Adrenal gland (tissue), 19 donors: ENCODE measurements at regions of chr7 and their contacts with region 1.

Region 1: DNA sequence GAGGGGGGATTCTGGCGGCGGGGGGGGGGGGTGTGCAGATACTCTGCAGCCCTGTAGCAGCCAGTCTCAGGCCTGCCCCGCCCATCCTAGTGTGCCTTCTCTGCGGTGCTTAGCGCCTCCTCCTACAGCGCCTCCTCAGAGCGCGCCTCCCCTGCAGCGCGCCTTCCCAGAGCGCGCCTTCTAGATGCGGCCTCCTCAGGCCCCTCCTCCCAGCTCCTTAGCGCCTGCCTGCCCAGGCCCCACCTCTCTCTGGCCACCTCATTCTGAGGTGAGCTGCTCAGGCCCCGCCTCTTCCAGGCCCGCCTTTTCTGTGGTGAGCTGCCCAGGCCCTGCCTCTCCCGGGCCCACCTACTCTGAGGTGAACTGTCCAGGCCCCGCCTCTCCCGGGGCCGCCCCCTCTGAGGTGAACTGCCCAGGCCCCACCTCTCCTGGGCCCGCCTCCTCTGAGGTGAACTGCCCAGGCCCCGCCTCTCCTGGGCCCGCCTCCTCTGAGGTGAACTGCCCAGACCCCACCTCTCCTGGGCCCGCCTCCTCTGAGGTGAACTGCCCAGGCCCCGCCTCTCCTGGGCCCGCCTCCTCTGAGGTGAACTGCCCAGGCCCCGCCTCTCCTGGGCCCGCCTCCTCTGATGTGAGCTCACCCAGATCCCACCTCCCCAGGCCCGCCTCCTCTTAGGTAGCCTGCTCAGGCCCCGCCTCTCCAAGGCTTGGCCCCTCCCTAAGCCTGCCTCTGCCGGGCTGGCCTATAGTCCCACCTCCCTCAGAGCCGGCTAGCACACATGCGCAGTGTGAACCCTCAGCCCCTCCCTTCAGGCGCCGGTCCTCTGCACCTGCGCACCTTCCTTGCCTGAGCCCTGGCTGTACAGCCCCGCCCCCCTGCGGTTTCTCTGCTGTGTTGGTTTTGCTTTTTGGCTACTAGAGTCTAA is 2.1 kb upstream of the SGCE start:
- DNase-seq: peak; percentile 93 to 97 (median 96)
- H3K4me3 ChIP-seq: peak overlapping the region in 2 of 4 donors; percentile 0 to 73
- H3K27ac ChIP-seq: peak overlapping the region in 3 of 5 donors; percentile 38 to 80 (median 44)
- H3K4me1 ChIP-seq: peaks cover 0 to 3% of the 10 kb centered on the region in 2 donors
- H3K27me3 ChIP-seq: no peaks in the 10 kb centered on the region
- CTCF ChIP-seq: no peak
- POLR2A ChIP-seq: peak in 1 of 2 donors; percentile 62

Region 2: GRCh38 chr7:94069162-94069739 is 588.8 kb before region 1 on chr7:
- intact Hi-C with region 1: no loop called
- DNase-seq: no peak
- H3K4me3 ChIP-seq: no peak overlapping the region
- H3K27ac ChIP-seq: no peak overlapping the region
- H3K4me1 ChIP-seq: peaks cover 0 to 7% of the 10 kb centered on the region in 2 donors
- H3K27me3 ChIP-seq: no peaks in the 10 kb centered on the region
- CTCF ChIP-seq: no peak
- POLR2A ChIP-seq: no peak

Region 3: DNA sequence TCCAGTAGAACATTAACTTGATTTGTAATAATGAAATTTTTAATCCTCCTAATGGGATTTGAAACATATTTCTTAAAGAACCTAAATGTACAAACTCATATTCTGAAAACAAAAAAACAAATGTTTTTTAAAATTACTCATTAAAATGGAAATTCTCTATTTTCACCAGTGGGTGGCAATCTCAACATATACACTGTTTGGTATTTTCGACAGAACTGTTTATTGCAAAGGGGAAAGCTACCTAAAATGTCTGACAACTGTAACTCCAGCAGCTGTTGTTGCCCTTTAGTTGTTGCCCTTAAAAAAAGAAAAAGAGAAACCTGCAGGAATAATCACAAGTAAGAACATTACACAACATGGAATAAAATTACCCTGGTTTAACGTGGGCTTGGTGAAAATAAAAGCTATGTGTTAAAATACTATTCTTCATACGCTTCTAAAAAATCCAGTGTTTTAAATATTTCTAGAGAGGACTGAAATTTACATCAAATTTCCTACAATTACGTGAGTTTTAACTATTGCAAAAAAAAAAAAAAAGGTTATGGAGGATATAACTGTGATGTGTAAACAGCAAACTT is 208.8 kb before region 1 on chr7:
- intact Hi-C with region 1: loop called (anchors 5 to 10 kb)
- DNase-seq: no peak
- H3K4me3 ChIP-seq: peak overlapping the region in 1 of 4 donors; percentile 13
- H3K27ac ChIP-seq: no peak overlapping the region
- H3K4me1 ChIP-seq: no peaks in the 10 kb centered on the region
- H3K27me3 ChIP-seq: no peaks in the 10 kb centered on the region
- CTCF ChIP-seq: peak; percentile 45 to 84 (median 72)
- POLR2A ChIP-seq: no peak

Region 4: DNA sequence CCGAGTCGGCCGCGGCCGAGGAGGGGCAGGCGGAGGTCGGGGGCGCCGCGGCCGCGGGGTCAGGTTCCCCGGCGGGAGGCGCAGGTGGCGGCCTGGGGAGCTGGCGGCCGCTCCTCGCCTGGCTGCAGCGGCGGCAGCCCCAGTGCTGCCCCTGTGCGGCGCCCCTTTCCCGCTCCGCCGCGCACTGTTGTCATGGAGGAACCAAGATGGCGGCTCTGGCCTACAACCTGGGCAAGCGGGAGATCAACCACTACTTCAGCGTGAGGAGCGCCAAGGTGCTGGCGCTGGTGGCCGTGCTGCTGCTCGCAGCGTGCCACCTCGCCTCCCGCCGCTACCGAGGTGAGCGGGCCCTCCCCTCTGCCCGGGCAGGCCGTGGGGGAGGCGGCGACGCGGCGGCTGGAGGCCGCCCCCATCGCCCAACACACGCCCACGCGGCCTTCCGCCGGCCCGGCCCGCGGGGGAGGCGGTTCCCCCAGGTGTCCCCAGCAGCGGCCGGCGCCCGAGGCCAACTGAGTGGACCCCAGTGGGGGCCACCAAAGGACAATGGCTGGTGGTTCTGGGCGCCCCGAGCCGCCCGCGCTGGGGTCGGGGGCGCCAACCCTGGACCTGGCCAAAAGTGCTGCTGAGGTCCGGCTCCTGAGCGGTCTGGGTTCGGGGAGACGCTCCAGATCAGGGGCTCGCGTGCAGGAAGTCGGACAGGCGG is 148.0 kb before region 1 on chr7:
- intact Hi-C with region 1: loop called in 1 of 2 experiments (anchors 10 kb)
- DNase-seq: peak; percentile 64 to 77 (median 72)
- H3K4me3 ChIP-seq: peak overlapping the region; percentile 66 to 98 (median 82)
- H3K27ac ChIP-seq: peak overlapping the region; percentile 72 to 97 (median 92)
- H3K4me1 ChIP-seq: peaks cover 26 to 43% of the 10 kb centered on the region in 2 donors
- H3K27me3 ChIP-seq: no peaks in the 10 kb centered on the region
- CTCF ChIP-seq: peak in 2 of 6 experiments; percentile 17 to 23
- POLR2A ChIP-seq: peak; percentile 39 to 62

Region 5: GRCh38 chr7:94739180-94739579 is 81.1 kb after region 1 on chr7:
- intact Hi-C with region 1: no loop called
- DNase-seq: no peak
- H3K4me3 ChIP-seq: no peak overlapping the region
- H3K27ac ChIP-seq: no peak overlapping the region
- H3K4me1 ChIP-seq: peaks cover 0 to 3% of the 10 kb centered on the region in 2 donors
- H3K27me3 ChIP-seq: no peaks in the 10 kb centered on the region
- CTCF ChIP-seq: no peak
- POLR2A ChIP-seq: no peak